Heart right ventricle (tissue), 16 donors: ENCODE measurements at regions of chr14 and their contacts with region 1.

Region 1: DNA sequence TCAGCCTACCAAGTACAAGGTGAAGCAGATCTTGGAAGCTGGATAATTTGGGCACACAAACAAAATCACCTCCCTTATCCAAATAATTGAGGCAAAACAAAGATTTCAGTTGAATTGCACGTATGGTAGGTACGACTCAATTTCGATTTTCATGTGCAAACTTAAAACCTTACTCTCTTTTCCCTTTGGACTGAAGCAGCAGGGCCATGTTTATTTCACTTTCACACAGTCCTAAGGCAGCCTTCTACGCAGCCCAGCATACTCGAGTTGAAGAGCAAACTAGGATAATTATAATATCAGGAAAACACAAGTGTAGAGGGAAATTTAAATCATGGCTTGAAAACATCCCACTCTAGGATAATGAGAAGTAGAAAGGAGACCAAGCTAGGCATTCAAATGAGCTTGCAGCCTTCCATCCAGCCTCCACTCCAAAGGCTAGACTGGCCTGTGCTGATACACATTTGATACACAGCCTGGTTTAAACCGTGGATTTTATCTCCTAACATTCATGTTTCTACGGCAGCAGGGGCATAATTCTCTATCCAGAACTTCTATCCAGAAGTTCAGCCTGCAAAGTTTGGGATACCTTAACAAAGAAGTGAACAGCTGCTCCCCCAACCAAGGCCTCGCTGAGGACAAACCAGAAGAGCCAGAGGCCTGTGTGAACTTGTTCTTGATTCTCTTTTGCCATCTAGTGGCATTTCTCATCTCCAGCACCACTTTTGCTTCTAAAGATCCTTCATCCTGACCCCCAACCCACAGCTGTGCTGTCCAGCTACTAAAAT is 2.4 kb upstream of the RNASE7 start:
- DNase-seq: peak in 1 of 2 donors; percentile 64
- ATAC-seq: peak; percentile 62 to 84 (median 72)
- H3K4me3 ChIP-seq: peak overlapping the region in 2 of 10 donors; percentile 12 to 13
- H3K27ac ChIP-seq: peak overlapping the region in 9 of 10 donors; percentile 63 to 87 (median 77)
- H3K4me1 ChIP-seq: peaks cover 13 to 53% (median 41%) of the 10 kb centered on the region in 9 donors
- H3K27me3 ChIP-seq: peaks cover 0 to under 1% (median 0%) of the 10 kb centered on the region in 7 donors
- CTCF ChIP-seq: peak; percentile 45 to 82 (median 73)

Region 2: GRCh38 chr14:20697273-20698017 is 342.3 kb before region 1 on chr14:
- intact Hi-C with region 1: loop called in 2 of 10 experiments (anchors 5 kb)
- DNase-seq: peak; percentile 37 to 48
- ATAC-seq: peak; percentile 69 to 87 (median 76)
- H3K4me3 ChIP-seq: no peak overlapping the region
- H3K27ac ChIP-seq: no peak overlapping the region
- H3K4me1 ChIP-seq: peaks cover 0 to 10% (median 0%) of the 10 kb centered on the region in 9 donors
- H3K27me3 ChIP-seq: no peaks in the 10 kb centered on the region
- CTCF ChIP-seq: peak; percentile 63 to 87 (median 82)

Region 3: DNA sequence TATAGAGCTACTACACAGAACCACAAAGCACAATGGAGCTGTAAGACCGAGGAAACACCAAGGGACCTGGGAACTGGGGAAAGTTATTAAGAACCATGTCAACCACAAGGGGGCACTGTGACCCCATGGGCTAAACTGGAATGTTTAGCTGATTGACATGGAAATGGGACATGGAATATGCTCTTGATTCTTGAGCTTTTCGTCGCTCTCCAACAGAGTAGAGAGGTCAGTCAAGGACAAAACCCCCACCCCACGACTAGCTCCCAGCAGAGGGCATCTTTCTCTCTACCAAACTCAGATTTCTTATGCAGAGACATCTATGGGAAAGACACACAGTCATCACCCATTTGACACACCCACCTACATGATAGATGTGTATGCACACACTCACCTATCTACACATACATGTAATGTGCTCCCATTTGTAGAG is 25.0 kb before region 1 on chr14:
- intact Hi-C with region 1: loop called in 9 of 10 experiments (anchors 1 to 5 kb)
- DNase-seq: peak; percentile 70 to 91
- ATAC-seq: peak; percentile 70 to 89 (median 83)
- H3K4me3 ChIP-seq: no peak overlapping the region
- H3K27ac ChIP-seq: peak overlapping the region in 4 of 10 donors; percentile 6 to 34 (median 14)
- H3K4me1 ChIP-seq: peaks cover 0 to 38% (median 6%) of the 10 kb centered on the region in 9 donors
- H3K27me3 ChIP-seq: no peaks in the 10 kb centered on the region
- CTCF ChIP-seq: peak; percentile 84 to 98 (median 93)

Region 4: DNA sequence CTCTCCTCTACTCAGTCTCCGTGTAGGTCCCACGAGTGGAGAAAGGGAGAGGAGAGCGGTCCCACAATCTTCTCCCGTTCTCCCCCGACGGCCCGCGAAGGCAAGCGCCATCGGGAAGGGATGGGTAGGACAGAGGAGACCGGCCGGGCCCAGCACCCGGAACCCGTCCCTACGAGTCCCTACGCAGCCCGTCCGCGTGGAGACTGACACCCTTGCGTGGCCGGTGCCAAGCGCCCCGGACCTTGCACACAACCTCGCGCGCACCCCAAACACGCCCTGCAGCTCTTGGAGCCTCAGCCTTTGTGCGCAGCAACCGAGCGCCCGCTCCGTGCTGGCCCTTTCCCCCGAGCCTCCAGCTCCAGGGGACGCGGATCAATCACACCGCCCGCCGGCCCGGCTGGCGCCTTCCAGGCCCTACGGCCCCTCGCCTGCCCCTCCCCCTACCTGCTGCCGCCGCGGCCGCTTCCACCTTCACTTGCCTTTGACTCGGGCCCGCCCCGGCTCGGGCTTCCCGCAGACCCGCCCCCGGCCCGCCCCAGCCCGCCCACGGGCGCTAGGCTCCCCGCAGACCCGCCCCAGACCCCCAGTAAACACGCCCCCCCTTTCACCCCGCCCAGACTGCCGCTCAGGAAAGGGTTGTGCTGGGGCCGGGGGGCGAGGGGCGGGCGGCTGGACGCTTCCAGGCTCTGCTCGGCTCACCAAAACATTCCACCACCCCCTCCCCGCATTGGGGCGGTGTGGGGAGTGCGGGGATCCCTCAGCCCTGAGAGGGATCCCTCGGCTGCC is 15.0 kb before region 1 on chr14 and contains the start of gene NDRG2:
- intact Hi-C with region 1: loop called in 5 of 10 experiments (anchors 1 to 2 kb)
- DNase-seq: peak; percentile 87 to 91
- ATAC-seq: peak; percentile 82 to 94 (median 85)
- H3K4me3 ChIP-seq: peak within 1 kb of the TSS; percentile 59 to 98 (median 82)
- H3K27ac ChIP-seq: peak within 1 kb of the TSS; percentile 86 to 100 (median 98)
- H3K4me1 ChIP-seq: peaks cover 14 to 57% (median 36%) of the 10 kb centered on the region in 9 donors
- H3K27me3 ChIP-seq: peaks cover 0 to 23% (median 0%) of the 10 kb centered on the region in 7 donors
- CTCF ChIP-seq: no peak
- total RNA-seq, gene NDRG2: 242 to 420 (median 299) TPM